CD4-positive, alpha-beta T cell (primary cell): ENCODE measurements at regions of chr21 and their contacts with region 1.

Region 1: GRCh38 chr21:33266050-33266788 is at the start of gene IL10RB:
- DNase-seq: peak; percentile 47 to 89 (median 72)
- ATAC-seq: peak; percentile 71
- H3K4me3 ChIP-seq: peak within 1 kb of the TSS; percentile 98
- H3K4me3 Mint-ChIP-seq: peak within 1 kb of the TSS; percentile 99
- H3K27ac ChIP-seq: peak within 1 kb of the TSS; percentile 79 to 85
- H3K27ac Mint-ChIP-seq: peak within 1 kb of the TSS; percentile 94
- H3K4me1 ChIP-seq: peaks cover 62% of the 10 kb centered on the region
- H3K4me1 Mint-ChIP-seq: peaks cover 60% of the 10 kb centered on the region
- H3K27me3 ChIP-seq: no peaks in the 10 kb centered on the region
- H3K27me3 Mint-ChIP-seq: no peaks in the 10 kb centered on the region
- CTCF ChIP-seq: no peak
- total RNA-seq, gene IL10RB: 7.2 to 9.2 TPM

Region 2: DNA sequence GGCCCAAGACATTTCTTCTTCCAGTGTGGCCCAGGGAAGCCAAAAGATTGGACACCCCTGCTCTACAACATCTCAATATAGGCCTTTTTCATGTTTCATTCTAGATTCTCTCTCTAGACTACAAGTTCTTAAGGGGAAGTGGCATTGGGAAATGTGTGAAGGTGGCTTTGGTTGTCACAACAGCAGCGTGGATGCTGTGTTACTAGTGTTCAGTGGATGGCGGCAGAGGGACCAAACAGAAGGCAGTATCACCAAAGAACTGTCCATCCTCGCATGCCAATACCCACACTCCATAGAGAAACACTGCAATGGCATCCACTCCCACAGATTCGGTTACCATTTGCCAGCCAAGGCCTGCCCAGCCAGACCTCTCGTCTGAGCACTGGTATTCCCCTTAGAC is 60.7 kb before region 1 on chr21:
- CTCF ChIA-PET with region 1: no interaction called
- POLR2A ChIA-PET with region 1: interaction called, 5 read pairs
- intact Hi-C with region 1: loop called (anchors 1 to 5 kb)
- DNase-seq: peak in 3 of 14 experiments; percentile 59 to 77 (median 63)
- ATAC-seq: peak; percentile 39
- H3K4me3 ChIP-seq: no peak overlapping the region
- H3K4me3 Mint-ChIP-seq: peak overlapping the region; percentile 73
- H3K27ac ChIP-seq: peak overlapping the region in 1 of 2 donors; percentile 1
- H3K27ac Mint-ChIP-seq: peak overlapping the region; percentile 84
- H3K4me1 ChIP-seq: peaks cover 43% of the 10 kb centered on the region
- H3K4me1 Mint-ChIP-seq: peaks cover 67% of the 10 kb centered on the region
- H3K27me3 ChIP-seq: no peaks in the 10 kb centered on the region
- H3K27me3 Mint-ChIP-seq: no peaks in the 10 kb centered on the region
- CTCF ChIP-seq: no peak

Region 3: DNA sequence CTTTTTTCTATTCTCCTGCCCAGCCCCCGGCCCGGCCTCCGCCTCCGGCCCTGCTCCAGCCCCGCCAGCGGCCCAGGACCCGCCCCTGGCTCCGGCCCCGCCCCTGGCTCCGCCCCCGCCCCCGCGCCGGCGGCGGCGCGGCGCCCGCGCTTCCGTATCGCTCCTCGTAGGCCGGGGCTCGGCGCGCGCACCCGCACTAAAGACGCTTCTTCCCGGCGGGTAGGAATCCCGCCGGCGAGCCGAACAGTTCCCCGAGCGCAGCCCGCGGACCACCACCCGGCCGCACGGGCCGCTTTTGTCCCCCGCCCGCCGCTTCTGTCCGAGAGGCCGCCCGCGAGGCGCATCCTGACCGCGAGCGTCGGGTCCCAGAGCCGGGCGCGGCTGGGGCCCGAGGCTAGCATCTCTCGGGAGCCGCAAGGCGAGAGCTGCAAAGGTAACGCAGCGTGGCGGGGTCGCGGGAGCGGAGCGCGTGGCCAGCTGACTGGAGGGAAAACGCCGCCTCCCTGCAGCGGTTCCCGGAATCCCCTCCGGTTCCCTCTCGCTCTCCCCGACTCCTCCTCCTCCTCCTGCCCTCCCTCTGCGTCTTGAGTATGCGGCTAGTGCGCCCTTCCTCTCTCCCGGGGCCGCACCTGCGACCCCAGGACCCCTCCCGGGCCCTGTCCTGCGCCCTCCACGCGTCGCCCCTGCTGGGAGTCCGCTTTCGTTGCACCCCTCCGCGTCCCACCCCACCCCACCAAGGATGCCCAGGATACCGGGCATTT is 36.3 kb before region 1 on chr21 and contains the start of gene IFNAR2:
- CTCF ChIA-PET with region 1: interaction called, 6 read pairs
- POLR2A ChIA-PET with region 1: interaction called, 9 read pairs
- intact Hi-C with region 1: loop called (anchors 2 to 5 kb)
- DNase-seq: peak; percentile 51 to 86 (median 71)
- ATAC-seq: peak; percentile 85
- H3K4me3 ChIP-seq: peak within 1 kb of the TSS; percentile 87
- H3K4me3 Mint-ChIP-seq: peak within 1 kb of the TSS; percentile 96
- H3K27ac ChIP-seq: peak within 1 kb of the TSS; percentile 60 to 87
- H3K27ac Mint-ChIP-seq: peak within 1 kb of the TSS; percentile 90
- H3K4me1 ChIP-seq: peaks cover 24% of the 10 kb centered on the region
- H3K4me1 Mint-ChIP-seq: peaks cover 48% of the 10 kb centered on the region
- H3K27me3 ChIP-seq: no peaks in the 10 kb centered on the region
- H3K27me3 Mint-ChIP-seq: no peaks in the 10 kb centered on the region
- CTCF ChIP-seq: no peak
- total RNA-seq, gene IFNAR2: 26.6 to 28.2 TPM

Region 4: GRCh38 chr21:33238565-33239255 is 27.5 kb before region 1 on chr21:
- CTCF ChIA-PET with region 1: interaction called, 6 read pairs
- POLR2A ChIA-PET with region 1: interaction called, 14 read pairs
- intact Hi-C with region 1: loop called in 1 of 2 experiments (anchors 5 kb)
- DNase-seq: peak in 3 of 14 experiments; percentile 50 to 69 (median 65)
- ATAC-seq: peak; percentile 68
- H3K4me3 ChIP-seq: peak overlapping the region; percentile 10
- H3K4me3 Mint-ChIP-seq: peak overlapping the region; percentile 65
- H3K27ac ChIP-seq: peak overlapping the region; percentile 57 to 66
- H3K27ac Mint-ChIP-seq: peak overlapping the region; percentile 89
- H3K4me1 ChIP-seq: peaks cover 70% of the 10 kb centered on the region
- H3K4me1 Mint-ChIP-seq: peaks cover 86% of the 10 kb centered on the region
- H3K27me3 ChIP-seq: no peaks in the 10 kb centered on the region
- H3K27me3 Mint-ChIP-seq: no peaks in the 10 kb centered on the region
- CTCF ChIP-seq: no peak

Region 5: DNA sequence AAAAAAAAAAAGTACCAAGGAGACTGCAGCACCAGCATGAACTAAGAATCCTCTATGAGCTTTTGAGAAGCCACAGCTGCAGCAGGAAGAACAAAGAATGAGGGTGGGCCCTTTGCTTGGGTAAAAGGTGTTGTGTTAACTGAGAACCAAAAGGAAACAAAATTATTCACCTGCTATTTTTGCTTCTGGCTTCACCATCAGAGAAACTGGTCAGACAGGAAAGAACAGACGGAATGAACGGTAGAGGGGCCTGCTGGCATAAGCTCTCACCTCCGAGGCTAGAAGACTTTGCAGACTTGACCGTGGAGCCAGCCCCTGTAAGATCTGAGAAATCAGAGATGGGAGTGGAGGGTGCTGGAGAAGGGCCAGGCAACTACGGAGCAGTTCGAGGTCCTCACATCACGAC is 27.6 kb after region 1 on chr21:
- CTCF ChIA-PET with region 1: interaction called, 4 read pairs
- POLR2A ChIA-PET with region 1: interaction called, 6 read pairs
- intact Hi-C with region 1: loop called in 1 of 2 experiments (anchors 2 kb)
- DNase-seq: peak in 6 of 14 experiments; percentile 9 to 50 (median 25)
- ATAC-seq: peak; percentile 92
- H3K4me3 ChIP-seq: no peak overlapping the region
- H3K4me3 Mint-ChIP-seq: peak overlapping the region; percentile 74
- H3K27ac ChIP-seq: peak overlapping the region in 1 of 2 donors; percentile 30
- H3K27ac Mint-ChIP-seq: peak overlapping the region; percentile 86
- H3K4me1 ChIP-seq: peaks cover 21% of the 10 kb centered on the region
- H3K4me1 Mint-ChIP-seq: peaks cover 44% of the 10 kb centered on the region
- H3K27me3 ChIP-seq: no peaks in the 10 kb centered on the region
- H3K27me3 Mint-ChIP-seq: no peaks in the 10 kb centered on the region
- CTCF ChIP-seq: no peak

Region 6: DNA sequence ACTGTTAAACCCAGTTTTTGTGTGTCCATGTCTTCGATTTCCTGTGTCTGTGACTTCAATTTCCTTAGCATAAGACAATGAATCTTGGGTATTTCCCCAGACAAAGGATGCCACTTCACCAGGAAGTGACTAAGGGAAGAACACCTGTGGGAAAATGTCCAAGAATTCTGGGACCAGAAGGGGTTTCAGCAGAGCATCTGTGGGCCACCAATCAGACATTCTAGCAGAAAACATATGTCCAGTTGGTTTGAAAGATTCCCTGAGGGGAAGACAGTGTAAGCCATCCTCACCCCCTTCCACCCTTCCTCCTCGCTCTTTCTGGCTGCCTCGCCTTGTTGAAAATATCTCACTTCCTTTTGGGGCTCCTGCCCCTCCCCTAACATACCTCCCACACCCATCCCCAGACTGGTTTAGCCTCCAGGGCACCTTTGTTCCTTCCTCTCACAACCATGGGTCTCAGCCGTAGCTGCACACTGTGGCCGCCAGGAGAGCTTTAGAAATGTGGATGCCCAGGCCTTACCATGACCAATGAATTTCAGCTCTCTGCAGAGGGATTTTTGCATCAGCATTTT is 33.0 kb after region 1 on chr21:
- CTCF ChIA-PET with region 1: no interaction called
- POLR2A ChIA-PET with region 1: interaction called, 12 read pairs
- intact Hi-C with region 1: no loop called
- DNase-seq: peak in 13 of 14 experiments; percentile 9 to 76 (median 36)
- ATAC-seq: peak; percentile 97
- H3K4me3 ChIP-seq: peak overlapping the region; percentile 6
- H3K4me3 Mint-ChIP-seq: peak overlapping the region; percentile 66
- H3K27ac ChIP-seq: peak overlapping the region; percentile 23 to 69
- H3K27ac Mint-ChIP-seq: peak overlapping the region; percentile 86
- H3K4me1 ChIP-seq: peaks cover 39% of the 10 kb centered on the region
- H3K4me1 Mint-ChIP-seq: peaks cover 53% of the 10 kb centered on the region
- H3K27me3 ChIP-seq: no peaks in the 10 kb centered on the region
- H3K27me3 Mint-ChIP-seq: no peaks in the 10 kb centered on the region
- CTCF ChIP-seq: no peak

Region 7: DNA sequence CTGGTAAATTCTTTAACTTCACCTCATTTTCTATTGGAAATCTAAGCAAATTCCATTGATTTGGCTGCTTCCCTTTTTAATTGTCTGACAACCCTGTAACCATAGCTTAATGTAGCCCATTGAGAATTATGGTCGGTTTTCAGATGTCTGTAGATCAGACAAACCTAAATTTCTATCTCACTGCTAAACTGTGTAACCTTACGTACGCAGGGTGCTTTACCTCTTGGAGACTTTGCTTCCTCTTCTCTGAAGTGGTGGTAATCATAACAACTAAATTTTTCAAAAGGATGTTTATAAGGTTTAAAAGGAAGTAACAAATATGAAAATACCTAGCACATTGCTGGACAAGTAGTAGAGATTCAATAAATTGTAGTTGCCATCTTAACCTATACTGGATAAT is 84.5 kb after region 1 on chr21:
- CTCF ChIA-PET with region 1: no interaction called
- POLR2A ChIA-PET with region 1: no interaction called
- intact Hi-C with region 1: no loop called
- DNase-seq: peak in 2 of 14 experiments; percentile 36 to 37
- ATAC-seq: peak; percentile 94
- H3K4me3 ChIP-seq: no peak overlapping the region
- H3K4me3 Mint-ChIP-seq: no peak overlapping the region
- H3K27ac ChIP-seq: peak overlapping the region in 1 of 2 donors; percentile 31
- H3K27ac Mint-ChIP-seq: peak overlapping the region; percentile 84
- H3K4me1 ChIP-seq: no peaks in the 10 kb centered on the region
- H3K4me1 Mint-ChIP-seq: peaks cover 23% of the 10 kb centered on the region
- H3K27me3 ChIP-seq: no peaks in the 10 kb centered on the region
- H3K27me3 Mint-ChIP-seq: no peaks in the 10 kb centered on the region
- CTCF ChIP-seq: no peak